ENCODE measurements at regions of chr6 and their contacts with region 1.

Region 1: DNA sequence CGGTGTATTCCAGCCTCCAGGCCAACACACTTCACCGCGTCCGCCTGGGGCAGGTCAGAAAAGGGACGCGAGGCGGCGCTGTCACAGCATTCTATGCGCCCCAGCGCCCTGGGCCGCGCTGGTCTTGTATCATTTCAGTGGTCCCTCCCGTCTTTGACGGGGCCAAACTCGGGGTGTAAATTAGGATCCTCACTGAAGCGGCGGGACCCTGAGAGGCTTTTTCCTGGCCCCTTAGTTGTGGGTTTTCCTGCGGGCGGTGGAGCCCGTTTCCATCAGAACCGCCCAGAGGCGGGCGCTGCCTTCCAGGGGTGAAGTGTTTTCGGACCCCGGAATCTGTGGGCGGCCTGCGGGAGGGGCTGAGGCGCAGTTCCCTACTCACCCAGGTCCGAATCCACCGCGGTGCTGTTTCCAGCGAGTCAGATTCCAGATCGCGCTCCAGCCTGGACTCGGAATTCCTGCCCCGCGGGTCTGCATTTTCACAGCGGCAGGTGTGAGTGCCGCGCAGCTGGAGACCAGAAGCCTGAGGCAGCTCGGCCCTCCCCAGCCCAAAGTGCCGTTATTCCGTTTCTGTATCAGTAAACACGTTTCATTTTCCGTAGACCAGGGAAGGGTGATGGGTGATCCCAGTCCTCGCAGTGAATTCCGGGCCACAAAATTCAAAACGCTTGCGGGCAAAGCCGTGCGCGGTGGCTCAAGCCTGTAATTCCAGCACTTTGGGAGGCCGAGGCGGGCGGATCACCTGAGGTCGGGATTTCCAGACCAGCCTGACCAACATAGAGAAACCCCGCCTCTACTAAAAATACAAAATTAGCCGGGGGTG is 3.9 kb upstream of the MICB start:
- DNase-seq: peak; percentile 43 to 80 (median 70)
- ATAC-seq: peak; percentile 37 to 44
- H3K4me3 Mint-ChIP-seq: peak overlapping the region; percentile 74 to 97 (median 81)
- H3K27ac Mint-ChIP-seq: peak overlapping the region; percentile 41 to 96 (median 88)
- H3K4me1 Mint-ChIP-seq: peaks cover 28 to 62% (median 52%) of the 10 kb centered on the region in 4 donors
- H3K27me3 Mint-ChIP-seq: no peaks in the 10 kb centered on the region

Region 2: GRCh38 chr6:30800871-30801270 is 693.2 kb before region 1 on chr6:
- POLR2A ChIA-PET with region 1: no interaction called
- DNase-seq: no peak
- ATAC-seq: no peak
- H3K4me3 Mint-ChIP-seq: no peak overlapping the region
- H3K27ac Mint-ChIP-seq: peak overlapping the region in 1 of 10 donors; percentile 61
- H3K4me1 Mint-ChIP-seq: peaks cover 8 to 24% (median 21%) of the 10 kb centered on the region in 4 donors
- H3K27me3 Mint-ChIP-seq: no peaks in the 10 kb centered on the region

Region 3: GRCh38 chr6:31328355-31328960 is 165.6 kb before region 1 on chr6:
- POLR2A ChIA-PET with region 1: no interaction called
- DNase-seq: no peak
- ATAC-seq: no peak
- H3K4me3 Mint-ChIP-seq: no peak overlapping the region
- H3K27ac Mint-ChIP-seq: no peak overlapping the region
- H3K4me1 Mint-ChIP-seq: peaks cover 0 to 14% (median 9%) of the 10 kb centered on the region in 4 donors
- H3K27me3 Mint-ChIP-seq: peaks cover under 1 to 5% (median 2%) of the 10 kb centered on the region in 5 donors

Region 4: DNA sequence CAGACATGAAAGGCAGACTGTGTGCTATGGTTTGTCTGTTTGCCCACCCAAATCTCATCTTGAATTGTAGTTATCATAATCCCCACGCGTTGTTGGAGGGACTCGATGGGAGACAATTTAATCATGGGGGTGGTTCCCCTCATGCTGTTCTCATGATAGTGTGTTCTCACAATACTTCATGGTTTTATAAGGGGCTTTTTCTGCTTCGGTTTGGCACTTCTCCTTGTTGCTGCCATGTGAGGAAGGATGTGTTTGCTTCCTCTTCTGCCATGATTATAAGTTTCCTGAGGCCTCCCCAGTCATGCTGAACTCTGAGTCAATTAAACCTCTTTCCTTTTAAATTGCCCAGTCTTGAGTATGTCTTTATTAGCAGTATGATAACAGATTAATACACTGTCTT is 43.3 kb before region 1 on chr6:
- POLR2A ChIA-PET with region 1: no interaction called
- DNase-seq: no peak
- ATAC-seq: no peak
- H3K4me3 Mint-ChIP-seq: no peak overlapping the region
- H3K27ac Mint-ChIP-seq: no peak overlapping the region
- H3K4me1 Mint-ChIP-seq: peaks cover 0 to 2% (median 0%) of the 10 kb centered on the region in 4 donors
- H3K27me3 Mint-ChIP-seq: peaks cover 5 to 17% (median 8%) of the 10 kb centered on the region in 5 donors

Region 5: DNA sequence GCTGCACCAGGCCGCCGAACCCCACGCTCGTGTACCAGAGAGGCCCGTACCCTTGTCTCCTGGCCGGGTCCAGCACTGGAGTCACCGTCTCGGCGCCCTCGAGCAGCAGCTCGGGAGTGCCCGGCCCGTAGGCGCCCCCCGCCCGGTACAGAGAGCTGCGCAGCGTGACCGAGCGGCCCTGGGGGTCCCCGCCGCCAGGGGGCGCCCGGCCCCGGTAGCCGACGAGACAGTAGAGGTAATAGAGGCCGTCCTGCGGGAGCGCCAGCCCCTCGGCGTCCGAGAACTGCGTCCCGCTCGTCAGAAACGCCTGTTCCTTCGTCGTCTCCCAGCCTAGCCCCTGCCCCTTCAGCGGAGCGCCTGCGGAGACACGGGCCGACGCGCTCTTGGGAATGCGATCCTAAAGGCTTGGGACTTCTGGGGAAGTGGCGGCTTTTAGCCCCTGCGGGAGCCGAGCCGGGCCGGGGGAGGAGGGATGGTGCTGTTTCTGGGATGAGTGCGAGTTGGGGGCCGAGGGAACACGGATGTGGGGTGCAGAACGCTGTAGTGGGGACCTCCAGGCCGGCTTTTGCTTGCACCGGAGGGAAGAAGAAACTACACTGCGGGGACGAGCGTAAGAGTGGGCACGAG is 86.8 kb after region 1 on chr6:
- POLR2A ChIA-PET with region 1: interaction called, 20 read pairs
- DNase-seq: peak; percentile 77 to 95 (median 90)
- ATAC-seq: peak; percentile 79
- H3K4me3 Mint-ChIP-seq: peak overlapping the region; percentile 97 to 100 (median 99)
- H3K27ac Mint-ChIP-seq: peak overlapping the region; percentile 92 to 100 (median 98)
- H3K4me1 Mint-ChIP-seq: peaks cover 32 to 87% (median 73%) of the 10 kb centered on the region in 4 donors
- H3K27me3 Mint-ChIP-seq: no peaks in the 10 kb centered on the region

Measured in naive thymus-derived CD8-positive, alpha-beta T cell (primary cell).